GM12878 (cell line): ENCODE measurements at regions of chr11 and their contacts with region 1.

Region 1: GRCh38 chr11:118338637-118339061 is 3.9 kb downstream of the CD3D start:
- DNase-seq: no peak
- ATAC-seq: peak; percentile 91
- H3K4me3 ChIP-seq: no peak overlapping the region
- H3K27ac ChIP-seq: no peak overlapping the region
- H3K4me1 ChIP-seq: no peaks in the 10 kb centered on the region
- H3K27me3 ChIP-seq: no peaks in the 10 kb centered on the region
- CTCF ChIP-seq: no peak
- EP300 ChIP-seq: 0 out of 4 replicates have a peak, but pooled peaks of 1 of the 2 experiments have one; percentile 21
- POLR2A ChIP-seq: no peak
- RAD21 ChIP-seq: no peak

Region 2: GRCh38 chr11:118353084-118353710 is 14.5 kb after region 1 on chr11:
- CTCF ChIA-PET with region 1: interaction called, 17 read pairs
- POLR2A ChIA-PET with region 1: no interaction called
- RAD21 ChIA-PET with region 1: interaction called, 3 read pairs
- SMC1A ChIA-PET with region 1: interaction called, 7 read pairs
- in situ Hi-C with region 1: no loop called
- intact Hi-C with region 1: no loop called
- DNase-seq: no peak
- ATAC-seq: no peak
- H3K4me3 ChIP-seq: no peak overlapping the region
- H3K27ac ChIP-seq: no peak overlapping the region
- H3K4me1 ChIP-seq: no peaks in the 10 kb centered on the region
- H3K27me3 ChIP-seq: peaks cover 0 to 4% of the 10 kb centered on the region in 2 experiments; a peak in 1 of 4 replicates
- CTCF ChIP-seq: peak; percentile 34 to 49 (median 47); a peak in 5 of 6 replicates
- EP300 ChIP-seq: no peak
- POLR2A ChIP-seq: no peak
- RAD21 ChIP-seq: peak; percentile 55